AG04450 (cell line): ENCODE measurements at regions of chr17 and their contacts with region 1.

Region 1: GRCh38 chr17:48671697-48672171 is 45.6 kb upstream of the HOXB9 start:
- DNase-seq: peak; percentile 32
- H3K4me3 ChIP-seq: peak overlapping the region; percentile 58
- H3K27ac ChIP-seq: no peak overlapping the region
- H3K27me3 ChIP-seq: peaks cover 13% of the 10 kb centered on the region
- CTCF ChIP-seq: peak; percentile 94

Region 2: GRCh38 chr17:48646183-48647102 is 25.3 kb before region 1 on chr17:
- CTCF ChIA-PET with region 1: interaction called, 10 read pairs
- POLR2A ChIA-PET with region 1: no interaction called
- DNase-seq: no peak
- H3K4me3 ChIP-seq: no peak overlapping the region
- H3K27ac ChIP-seq: no peak overlapping the region
- H3K27me3 ChIP-seq: peaks cover 73% of the 10 kb centered on the region
- CTCF ChIP-seq: no peak